Common myeloid progenitor, CD34-positive (primary cell): ENCODE measurements at regions of chr11 and their contacts with region 1.

Region 1: GRCh38 chr11:72793425-72794367 is at the start of gene STARD10:
- DNase-seq: peak; percentile 93 to 96 (median 95)
- H3K4me3 ChIP-seq: peak within 1 kb of the TSS; percentile 72 to 96 (median 87)
- H3K27ac ChIP-seq: peak within 1 kb of the TSS; percentile 87 to 92
- H3K4me1 ChIP-seq: peaks cover 16 to 46% (median 40%) of the 10 kb centered on the region in 4 experiments
- H3K27me3 ChIP-seq: no peaks in the 10 kb centered on the region

Region 2: GRCh38 chr11:72736452-72737069 is 57.1 kb before region 1 on chr11:
- CTCF ChIA-PET with region 1: interaction called, 118 read pairs
- POLR2A ChIA-PET with region 1: interaction called, 5 read pairs
- DNase-seq: peak; percentile 91 to 98 (median 97)
- H3K4me3 ChIP-seq: peak overlapping the region in 4 of 7 experiments; percentile 40 to 62 (median 52)
- H3K27ac ChIP-seq: peak overlapping the region; percentile 87 to 93
- H3K4me1 ChIP-seq: peaks cover 8 to 78% (median 65%) of the 10 kb centered on the region in 4 experiments
- H3K27me3 ChIP-seq: no peaks in the 10 kb centered on the region

Region 3: GRCh38 chr11:72762641-72763304 is 30.9 kb before region 1 on chr11:
- CTCF ChIA-PET with region 1: interaction called, 17 read pairs
- POLR2A ChIA-PET with region 1: no interaction called
- DNase-seq: peak in 2 of 3 donors; percentile 84 to 86
- H3K4me3 ChIP-seq: peak overlapping the region in 1 of 7 experiments; percentile 4
- H3K27ac ChIP-seq: no peak overlapping the region
- H3K4me1 ChIP-seq: peaks cover 0 to 26% (median 15%) of the 10 kb centered on the region in 4 experiments
- H3K27me3 ChIP-seq: no peaks in the 10 kb centered on the region

Region 4: GRCh38 chr11:72772978-72773690 is 20.6 kb before region 1 on chr11:
- CTCF ChIA-PET with region 1: interaction called, 87 read pairs
- POLR2A ChIA-PET with region 1: no interaction called
- DNase-seq: peak in 2 of 3 donors; percentile 37 to 50
- H3K4me3 ChIP-seq: no peak overlapping the region
- H3K27ac ChIP-seq: no peak overlapping the region
- H3K4me1 ChIP-seq: peaks cover 0 to 33% (median 4%) of the 10 kb centered on the region in 4 experiments
- H3K27me3 ChIP-seq: no peaks in the 10 kb centered on the region

Region 5: DNA sequence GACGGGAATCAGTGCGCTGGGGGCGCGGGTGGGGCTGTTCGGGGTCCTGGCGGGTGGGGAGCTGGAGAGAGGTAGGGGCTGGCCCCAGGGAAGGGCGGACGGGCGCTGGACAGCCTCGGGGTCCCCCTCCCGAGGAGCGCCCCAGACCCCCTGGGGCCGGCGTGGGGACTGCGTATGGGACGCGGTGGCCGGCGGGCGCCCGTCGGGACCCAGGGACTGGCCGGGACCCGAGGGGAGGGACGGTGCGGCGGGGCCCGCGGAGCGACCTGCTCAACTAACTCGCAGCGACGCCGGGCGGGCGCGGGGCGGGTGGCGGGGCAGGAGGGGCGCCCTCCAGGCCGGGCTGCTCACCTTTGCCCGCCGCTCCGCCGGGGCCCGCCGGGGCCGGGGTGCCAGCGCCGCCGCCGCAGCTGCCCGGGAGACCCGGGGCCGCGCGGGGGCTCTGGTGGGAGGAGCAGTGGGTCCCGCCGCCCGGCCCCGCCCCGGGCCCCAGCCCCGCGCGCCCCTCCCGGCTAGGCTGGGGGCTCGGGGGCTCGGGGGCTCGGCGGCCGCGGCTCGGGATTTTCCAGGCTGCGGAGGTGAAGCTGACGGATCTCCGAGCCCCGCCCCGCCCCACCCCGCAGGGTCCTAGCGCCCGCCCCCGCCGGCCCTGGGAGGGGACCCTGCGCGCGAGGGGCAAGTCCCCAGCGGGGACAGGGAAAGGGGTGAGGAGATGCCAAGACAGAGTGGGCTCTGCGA is 12.2 kb before region 1 on chr11:
- CTCF ChIA-PET with region 1: interaction called, 87 read pairs
- POLR2A ChIA-PET with region 1: no interaction called
- DNase-seq: peak in 2 of 3 donors; percentile 44 to 53
- H3K4me3 ChIP-seq: peak overlapping the region; percentile 20 to 76 (median 55)
- H3K27ac ChIP-seq: no peak overlapping the region
- H3K4me1 ChIP-seq: peaks cover 0 to 29% (median 22%) of the 10 kb centered on the region in 4 experiments
- H3K27me3 ChIP-seq: peaks cover 0 to 5% (median 0%) of the 10 kb centered on the region in 5 experiments

Region 6: DNA sequence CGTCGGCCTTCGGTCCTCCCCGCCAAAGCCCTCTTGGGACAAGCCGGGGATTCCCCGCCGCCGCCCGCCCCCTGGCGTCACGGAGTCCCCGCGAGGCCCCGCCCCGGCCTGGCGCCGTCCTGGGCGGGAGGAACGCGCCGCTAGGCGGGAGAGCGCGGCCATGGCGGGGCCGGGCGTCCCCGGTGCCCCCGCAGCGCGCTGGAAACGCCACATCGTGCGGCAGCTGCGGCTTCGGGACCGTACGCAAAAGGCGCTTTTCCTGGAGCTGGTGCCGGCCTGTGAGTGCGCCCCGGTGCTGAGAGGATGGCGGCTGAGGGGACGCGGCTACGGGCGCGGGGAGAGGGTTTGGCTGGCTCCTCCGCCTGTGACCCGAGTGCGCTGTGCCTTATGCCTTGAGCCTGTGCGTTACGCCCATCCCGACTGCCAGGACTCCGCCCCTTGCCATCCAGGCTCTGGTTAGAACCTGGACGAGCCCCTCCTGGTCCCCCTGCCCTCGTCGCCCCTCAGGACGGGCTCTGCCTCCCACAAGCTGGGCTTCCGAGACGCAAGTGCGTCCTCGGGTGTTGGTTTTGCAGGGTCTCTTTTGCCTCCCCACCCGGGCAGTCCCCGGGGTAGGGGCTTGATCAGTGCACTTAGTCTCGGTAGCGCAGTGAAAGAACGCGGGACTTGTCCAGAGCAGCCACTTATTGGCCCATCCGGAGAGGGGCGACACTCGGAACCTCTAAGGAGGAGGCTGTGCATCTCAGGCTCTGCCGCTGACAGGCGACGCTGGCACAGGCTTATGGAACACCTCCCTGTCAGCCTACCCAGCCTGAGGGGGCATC is 20.8 kb after region 1 on chr11 and contains the start of gene ATG16L2:
- CTCF ChIA-PET with region 1: interaction called, 76 read pairs
- POLR2A ChIA-PET with region 1: interaction called, 36 read pairs
- DNase-seq: peak; percentile 85 to 92 (median 89)
- H3K4me3 ChIP-seq: peak within 1 kb of the TSS; percentile 80 to 98 (median 88)
- H3K27ac ChIP-seq: peak within 1 kb of the TSS; percentile 97 to 99
- H3K4me1 ChIP-seq: peaks cover 9 to 64% (median 51%) of the 10 kb centered on the region in 4 experiments
- H3K27me3 ChIP-seq: no peaks in the 10 kb centered on the region